ENCODE measurements at regions of chr1 and their contacts with region 1.

Region 1: GRCh38 chr1:101238681-101239094 is 1.9 kb downstream of the S1PR1 start:
- DNase-seq: peak; percentile 95
- H3K4me3 ChIP-seq: peak overlapping the region; percentile 65 to 85 (median 71)
- H3K27ac ChIP-seq: peak overlapping the region; percentile 82 to 87 (median 84)
- H3K4me1 ChIP-seq: peaks cover 22 to 36% (median 30%) of the 10 kb centered on the region in 4 donors
- H3K27me3 ChIP-seq: peaks cover 0 to 3% (median 0%) of the 10 kb centered on the region in 4 donors
- CTCF ChIP-seq: peak; percentile 91 to 97 (median 93)
- EP300 ChIP-seq: no peak
- POLR2A ChIP-seq: no peak

Region 2: GRCh38 chr1:100921109-100921706 is 317.5 kb before region 1 on chr1:
- intact Hi-C with region 1: loop called (anchors 2 kb)
- DNase-seq: no peak
- H3K4me3 ChIP-seq: no peak overlapping the region
- H3K27ac ChIP-seq: no peak overlapping the region
- H3K4me1 ChIP-seq: no peaks in the 10 kb centered on the region
- H3K27me3 ChIP-seq: no peaks in the 10 kb centered on the region
- CTCF ChIP-seq: peak; percentile 72 to 76 (median 75)
- EP300 ChIP-seq: no peak
- POLR2A ChIP-seq: no peak

Region 3: GRCh38 chr1:101025657-101026504 is 212.8 kb before region 1 on chr1 and contains the start of gene DPH5:
- intact Hi-C with region 1: loop called (anchors 5 kb)
- DNase-seq: peak; percentile 96
- H3K4me3 ChIP-seq: peak within 1 kb of the TSS; percentile 69 to 84 (median 72)
- H3K27ac ChIP-seq: peak within 1 kb of the TSS; percentile 80 to 88 (median 86)
- H3K4me1 ChIP-seq: peaks cover 13 to 27% (median 22%) of the 10 kb centered on the region in 4 donors
- H3K27me3 ChIP-seq: no peaks in the 10 kb centered on the region
- CTCF ChIP-seq: no peak
- EP300 ChIP-seq: no peak
- POLR2A ChIP-seq: peak; percentile 60
- total RNA-seq, gene DPH5: 12.5 to 18.1 (median 15.1) TPM

Region 4: DNA sequence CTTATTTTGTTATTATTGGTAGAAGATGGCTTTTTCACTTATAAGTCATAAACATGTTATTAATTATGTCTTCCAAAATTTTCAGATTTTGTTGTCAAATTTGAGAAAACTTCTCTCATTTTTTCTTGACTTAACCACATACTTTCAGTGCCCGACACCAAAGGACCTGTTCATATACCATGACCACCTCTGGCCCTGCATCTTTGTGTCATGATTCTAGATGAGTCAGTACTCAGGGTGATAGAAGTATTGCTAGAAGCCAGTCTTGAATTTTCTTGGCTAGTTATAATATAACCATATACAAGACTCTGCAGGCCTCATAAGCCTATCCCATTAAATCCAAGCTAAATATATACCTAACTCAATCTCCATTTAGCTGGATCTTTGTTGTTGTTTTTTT is 177.7 kb before region 1 on chr1:
- intact Hi-C with region 1: no loop called
- DNase-seq: no peak
- H3K4me3 ChIP-seq: no peak overlapping the region
- H3K27ac ChIP-seq: no peak overlapping the region
- H3K4me1 ChIP-seq: no peaks in the 10 kb centered on the region
- H3K27me3 ChIP-seq: no peaks in the 10 kb centered on the region
- CTCF ChIP-seq: no peak
- EP300 ChIP-seq: no peak
- POLR2A ChIP-seq: no peak

Region 5: DNA sequence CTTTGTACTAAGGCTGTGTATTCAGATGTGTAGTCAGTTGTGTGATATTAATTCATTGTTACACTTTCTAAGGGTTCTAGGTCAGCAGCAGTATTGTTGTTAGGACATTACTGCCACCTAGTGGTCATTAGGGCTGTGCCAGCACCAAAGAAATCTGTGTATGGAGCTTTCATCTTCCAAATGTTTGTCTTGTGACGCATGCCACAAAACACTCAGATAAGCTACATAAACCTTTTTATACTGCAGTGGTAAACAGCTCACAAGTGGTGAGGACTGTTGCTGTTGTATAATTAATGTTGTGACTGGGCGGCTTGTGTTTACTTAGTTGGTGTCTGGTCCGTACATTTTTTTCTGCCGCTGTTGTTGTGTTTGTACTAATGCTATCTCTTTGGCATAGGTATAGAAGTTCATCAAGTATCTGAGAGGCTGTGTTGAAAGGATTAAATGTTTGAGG is 49.8 kb after region 1 on chr1:
- intact Hi-C with region 1: loop called (anchors 5 kb)
- DNase-seq: no peak
- H3K4me3 ChIP-seq: no peak overlapping the region
- H3K27ac ChIP-seq: no peak overlapping the region
- H3K4me1 ChIP-seq: peaks cover 4 to 8% (median 4%) of the 10 kb centered on the region in 4 donors
- H3K27me3 ChIP-seq: no peaks in the 10 kb centered on the region
- CTCF ChIP-seq: peak; percentile 80 to 93 (median 88)
- EP300 ChIP-seq: no peak
- POLR2A ChIP-seq: no peak

Measured in esophagus muscularis mucosa (tissue), 4 donors.